Activated T-helper 1 cell treated with anti-CD3 and anti-CD28 coated beads, Interleukin-12 subunit alpha, Interleukin-12 subunit beta, Interleukin-2, Interleukin-4 antibody, amounts not matched to agents 30 ng/mL and 10 ng/mL and 1 ng/mL, durations not matched to agents 14 hours and 24 hours and 36 hours (primary cell): ENCODE measurements at regions of chr11 and their contacts with region 1.

Region 1: GRCh38 chr11:85664615-85665481 is at the start of gene CREBZF:
- DNase-seq: peak; percentile 94
- H3K4me3 Mint-ChIP-seq: peak within 1 kb of the TSS; percentile 99
- H3K27ac Mint-ChIP-seq: peak within 1 kb of the TSS; percentile 97
- H3K4me1 Mint-ChIP-seq: peaks cover 51% of the 10 kb centered on the region
- H3K27me3 Mint-ChIP-seq: no peaks in the 10 kb centered on the region
- total RNA-seq, gene CREBZF: 52.0 and 55.9 TPM in 2 replicates

Region 2: GRCh38 chr11:84751371-84751770 is 913.5 kb before region 1 on chr11:
- intact Hi-C with region 1: no loop called
- DNase-seq: no peak
- H3K4me3 Mint-ChIP-seq: no peak overlapping the region
- H3K27ac Mint-ChIP-seq: no peak overlapping the region
- H3K4me1 Mint-ChIP-seq: no peaks in the 10 kb centered on the region
- H3K27me3 Mint-ChIP-seq: no peaks in the 10 kb centered on the region

Region 3: DNA sequence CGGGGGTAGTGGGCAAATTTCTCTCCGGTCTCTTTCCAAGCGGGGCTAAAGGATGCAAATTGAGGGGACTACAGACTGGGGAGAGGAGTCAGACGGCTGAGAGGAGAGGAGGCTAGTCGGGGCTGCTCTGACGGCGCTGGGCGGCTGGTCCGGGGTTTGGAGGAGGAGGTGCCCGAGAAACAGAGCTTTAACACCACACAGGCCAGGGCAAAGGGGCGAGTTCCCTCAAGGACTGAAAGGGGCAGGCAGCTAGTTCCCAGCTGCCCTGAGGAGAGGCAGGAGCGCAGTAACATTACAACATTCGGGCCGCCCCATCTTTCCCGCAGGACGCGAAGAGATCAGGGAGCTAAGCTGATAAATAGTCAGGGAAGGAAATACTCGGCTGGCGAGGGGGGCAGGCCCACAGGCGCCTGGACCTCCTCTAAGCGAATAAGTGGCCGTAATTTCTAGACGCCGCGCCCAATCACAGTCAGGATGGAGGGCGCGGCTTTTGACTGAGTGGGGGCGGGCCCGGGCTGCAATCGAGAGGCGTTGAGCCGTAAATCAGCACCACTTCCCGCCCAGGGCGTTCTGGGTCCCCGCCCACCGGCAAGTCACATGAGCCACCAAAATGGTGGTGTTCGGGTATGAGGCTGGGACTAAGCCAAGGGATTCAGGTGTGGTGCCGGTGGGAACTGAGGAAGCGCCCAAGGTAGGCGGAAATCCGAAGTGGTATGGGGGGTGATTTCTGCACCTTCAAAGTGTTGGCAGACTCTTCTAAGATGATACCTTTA is 36.7 kb before region 1 on chr11 and contains the start of gene TMEM126B:
- intact Hi-C with region 1: loop called (anchors 1 kb)
- DNase-seq: peak; percentile 96
- H3K4me3 Mint-ChIP-seq: peak within 1 kb of the TSS; percentile 97
- H3K27ac Mint-ChIP-seq: peak within 1 kb of the TSS; percentile 94
- H3K4me1 Mint-ChIP-seq: peaks cover 52% of the 10 kb centered on the region
- H3K27me3 Mint-ChIP-seq: peaks cover 6% of the 10 kb centered on the region
- total RNA-seq, gene TMEM126B: 52.5 and 57.2 TPM in 2 replicates

Region 4: GRCh38 chr11:85694386-85694980 is 29.6 kb after region 1 on chr11:
- intact Hi-C with region 1: no loop called
- DNase-seq: no peak
- H3K4me3 Mint-ChIP-seq: no peak overlapping the region
- H3K27ac Mint-ChIP-seq: no peak overlapping the region
- H3K4me1 Mint-ChIP-seq: peaks cover 51% of the 10 kb centered on the region
- H3K27me3 Mint-ChIP-seq: peaks cover 4% of the 10 kb centered on the region

Region 5: DNA sequence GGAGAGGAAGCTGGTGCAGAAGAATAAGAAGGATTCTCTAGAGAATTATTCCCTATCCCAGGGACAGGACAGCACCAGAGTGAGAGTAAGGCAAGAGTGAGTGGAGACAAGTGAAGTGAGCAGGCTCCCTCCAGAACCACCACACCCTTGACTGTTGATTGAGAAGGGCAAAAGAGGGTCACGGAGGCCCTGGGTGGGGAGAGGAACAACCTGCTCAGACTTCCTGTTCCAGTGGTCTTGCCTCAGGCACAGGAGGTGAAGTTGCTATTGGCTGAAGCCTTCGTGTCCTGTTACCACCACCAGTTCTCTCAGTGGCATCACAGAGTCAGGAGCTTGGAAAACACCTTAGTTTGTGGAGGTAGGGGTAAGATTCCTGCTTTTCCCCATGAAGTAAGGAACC is 72.9 kb after region 1 on chr11:
- intact Hi-C with region 1: no loop called
- DNase-seq: no peak
- H3K4me3 Mint-ChIP-seq: no peak overlapping the region
- H3K27ac Mint-ChIP-seq: no peak overlapping the region
- H3K4me1 Mint-ChIP-seq: peaks cover 35% of the 10 kb centered on the region
- H3K27me3 Mint-ChIP-seq: peaks cover 3% of the 10 kb centered on the region